ENCODE measurements at regions of chr11 and their contacts with region 1.

Region 1: DNA sequence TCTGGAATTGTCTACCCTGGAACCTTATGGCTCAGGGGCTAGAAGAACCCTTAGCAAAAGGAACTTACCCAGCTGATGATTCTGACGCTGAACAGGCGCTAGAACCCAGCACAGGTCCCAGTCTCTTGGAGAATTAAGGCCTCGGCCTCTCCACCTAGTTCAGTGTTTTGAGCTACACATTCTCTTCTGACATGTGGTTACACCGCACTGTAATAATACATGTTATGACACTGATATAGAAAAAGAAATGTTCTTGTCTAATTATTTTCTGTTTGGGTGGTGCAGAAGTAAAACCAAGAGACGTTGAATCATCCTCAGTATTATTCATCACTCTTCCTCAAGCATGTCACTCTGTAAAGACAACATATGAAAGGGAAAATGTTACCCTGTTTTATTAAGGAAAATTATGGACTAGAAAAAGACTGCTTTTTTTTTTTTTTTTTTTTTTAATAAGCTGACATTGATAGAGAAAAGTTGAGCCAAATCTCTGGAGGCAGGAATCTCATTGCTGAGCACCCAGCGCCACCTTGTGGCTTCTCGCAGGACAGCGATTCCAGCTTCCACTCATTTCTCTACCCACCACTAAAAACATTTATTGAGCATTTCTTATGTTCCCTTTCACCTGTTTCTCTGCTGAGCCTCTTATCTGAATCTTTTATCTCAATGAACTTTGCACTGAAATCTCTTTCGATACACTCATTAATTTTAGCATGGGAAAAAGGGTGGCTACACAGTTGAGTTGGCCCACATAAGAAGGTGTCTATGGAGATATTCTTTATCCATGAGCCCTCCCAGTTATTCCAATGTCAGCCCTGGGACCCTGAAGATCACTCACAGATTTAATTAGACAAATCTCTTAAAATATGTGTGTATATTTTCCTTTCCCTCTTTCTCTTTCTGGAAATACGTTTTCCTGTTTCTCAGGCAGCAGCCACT is 12.6 kb upstream of the APLNR start:
- DNase-seq: peak; percentile 53
- H3K4me3 ChIP-seq: no peak overlapping the region
- H3K27ac ChIP-seq: no peak overlapping the region
- H3K4me1 ChIP-seq: no peaks in the 10 kb centered on the region
- H3K27me3 ChIP-seq: no peaks in the 10 kb centered on the region
- CTCF ChIP-seq: peak; percentile 36 to 83 (median 78)
- POLR2A ChIP-seq: no peak

Region 2: GRCh38 chr11:56841210-56841810 is 408.3 kb before region 1 on chr11:
- intact Hi-C with region 1: loop called (anchors 1 kb)
- DNase-seq: peak; percentile 41
- H3K4me3 ChIP-seq: no peak overlapping the region
- H3K27ac ChIP-seq: no peak overlapping the region
- H3K4me1 ChIP-seq: no peaks in the 10 kb centered on the region
- H3K27me3 ChIP-seq: no peaks in the 10 kb centered on the region
- CTCF ChIP-seq: peak; percentile 22 to 78 (median 70)
- POLR2A ChIP-seq: no peak

Region 3: GRCh38 chr11:57116654-57117053 is 133.0 kb before region 1 on chr11:
- intact Hi-C with region 1: loop called (anchors 10 kb)
- DNase-seq: no peak
- H3K4me3 ChIP-seq: no peak overlapping the region
- H3K27ac ChIP-seq: no peak overlapping the region
- H3K4me1 ChIP-seq: no peaks in the 10 kb centered on the region
- H3K27me3 ChIP-seq: no peaks in the 10 kb centered on the region
- CTCF ChIP-seq: peak in 3 of 4 experiments; percentile 9 to 45 (median 39)
- POLR2A ChIP-seq: no peak

Measured in prostate gland (tissue), 2 donors.